ENCODE measurements at regions of chr9 and their contacts with region 1.

Region 1: DNA sequence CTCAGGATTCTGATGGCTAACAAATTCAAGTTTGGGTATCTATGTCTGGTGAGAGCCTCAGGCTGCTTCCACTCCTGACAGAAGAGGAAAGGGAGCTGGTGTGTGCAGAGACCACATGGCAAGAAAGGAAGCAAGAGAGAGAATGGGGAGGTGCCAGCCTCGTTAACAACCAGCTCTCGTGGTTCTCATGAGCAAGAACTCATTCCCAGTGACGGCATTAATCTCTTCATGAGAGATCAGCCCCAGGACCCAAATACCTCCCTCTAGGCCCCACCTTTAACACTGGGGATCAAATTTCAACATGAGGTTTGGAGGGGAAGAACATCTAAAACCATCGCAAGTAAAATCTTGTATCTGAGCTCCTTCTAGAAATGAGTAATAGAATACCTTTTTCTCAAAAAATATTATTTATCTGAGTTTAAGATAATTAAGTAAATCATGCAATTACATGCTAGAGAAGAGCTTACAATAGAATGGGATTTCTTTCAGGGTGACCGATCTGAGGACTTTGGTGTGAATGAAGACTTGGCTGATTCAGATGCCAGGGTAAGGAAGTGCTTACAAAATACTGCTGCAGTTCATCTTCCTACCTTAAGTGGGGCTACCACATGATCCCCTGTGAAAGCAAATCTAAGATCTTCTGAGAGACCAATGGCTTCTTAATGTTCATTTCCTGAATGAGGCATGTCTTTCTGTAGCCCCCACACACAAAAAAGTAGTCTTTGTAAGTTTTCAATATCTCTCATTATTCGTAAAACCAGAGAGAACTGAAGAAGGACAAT is 11.5 kb downstream of the ANXA1 start:
- DNase-seq: no peak
- H3K4me3 Mint-ChIP-seq: no peak overlapping the region
- H3K27ac Mint-ChIP-seq: no peak overlapping the region
- H3K4me1 Mint-ChIP-seq: peaks cover 4% of the 10 kb centered on the region
- H3K27me3 Mint-ChIP-seq: no peaks in the 10 kb centered on the region
- CTCF ChIP-seq: no peak

Region 2: GRCh38 chr9:72894342-72894741 is 268.8 kb before region 1 on chr9:
- CTCF ChIA-PET with region 1: no interaction called
- POLR2A ChIA-PET with region 1: no interaction called
- intact Hi-C with region 1: no loop called
- DNase-seq: no peak
- H3K4me3 Mint-ChIP-seq: no peak overlapping the region
- H3K27ac Mint-ChIP-seq: no peak overlapping the region
- H3K4me1 Mint-ChIP-seq: no peaks in the 10 kb centered on the region
- H3K27me3 Mint-ChIP-seq: peaks cover 80% of the 10 kb centered on the region
- CTCF ChIP-seq: no peak

Region 3: GRCh38 chr9:73104342-73104741 is 58.8 kb before region 1 on chr9:
- CTCF ChIA-PET with region 1: interaction called, 18 read pairs
- POLR2A ChIA-PET with region 1: interaction called, 5 read pairs
- intact Hi-C with region 1: no loop called
- DNase-seq: no peak
- H3K4me3 Mint-ChIP-seq: no peak overlapping the region
- H3K27ac Mint-ChIP-seq: no peak overlapping the region
- H3K4me1 Mint-ChIP-seq: peaks cover 7% of the 10 kb centered on the region
- H3K27me3 Mint-ChIP-seq: no peaks in the 10 kb centered on the region
- CTCF ChIP-seq: no peak

Region 4: DNA sequence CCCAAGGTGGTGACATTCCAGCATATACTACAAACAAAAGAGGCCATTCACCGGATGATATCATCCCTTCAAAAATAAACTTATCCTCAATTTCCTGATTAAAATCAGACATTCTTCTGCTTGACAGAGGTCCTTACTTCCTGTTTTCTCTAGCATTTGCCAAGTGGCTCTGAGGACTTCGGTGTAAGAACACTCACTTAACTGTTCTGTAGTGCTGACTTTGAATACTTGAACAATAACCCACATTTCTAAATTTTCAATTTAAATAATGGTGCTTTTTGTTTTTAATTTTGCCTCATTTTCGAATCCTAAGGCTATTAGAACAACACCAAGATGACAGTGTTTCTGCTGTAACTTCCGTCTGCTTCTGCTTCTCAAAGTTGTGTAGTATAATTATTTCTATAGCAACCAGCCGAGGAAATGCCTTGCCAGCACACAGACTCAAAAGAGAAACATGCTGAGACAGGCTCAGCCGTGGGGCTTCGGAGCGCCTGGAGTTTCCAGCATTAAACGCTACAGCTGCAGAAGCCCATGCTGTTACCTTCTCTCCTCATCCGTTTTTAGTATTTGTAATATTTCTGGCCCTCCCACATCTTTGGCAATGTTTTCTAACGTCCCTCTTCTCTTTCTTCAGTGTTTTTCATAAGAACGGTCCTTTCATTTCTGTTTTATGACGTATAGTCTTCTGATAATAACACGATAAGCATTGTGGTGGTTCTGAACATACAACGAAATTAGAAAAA is 31.0 kb before region 1 on chr9:
- CTCF ChIA-PET with region 1: interaction called, 3 read pairs
- POLR2A ChIA-PET with region 1: interaction called, 95 read pairs
- intact Hi-C with region 1: no loop called
- DNase-seq: peak; percentile 90
- H3K4me3 Mint-ChIP-seq: peak overlapping the region; percentile 76
- H3K27ac Mint-ChIP-seq: peak overlapping the region; percentile 97
- H3K4me1 Mint-ChIP-seq: peaks cover 31% of the 10 kb centered on the region
- H3K27me3 Mint-ChIP-seq: no peaks in the 10 kb centered on the region
- CTCF ChIP-seq: no peak

Region 5: DNA sequence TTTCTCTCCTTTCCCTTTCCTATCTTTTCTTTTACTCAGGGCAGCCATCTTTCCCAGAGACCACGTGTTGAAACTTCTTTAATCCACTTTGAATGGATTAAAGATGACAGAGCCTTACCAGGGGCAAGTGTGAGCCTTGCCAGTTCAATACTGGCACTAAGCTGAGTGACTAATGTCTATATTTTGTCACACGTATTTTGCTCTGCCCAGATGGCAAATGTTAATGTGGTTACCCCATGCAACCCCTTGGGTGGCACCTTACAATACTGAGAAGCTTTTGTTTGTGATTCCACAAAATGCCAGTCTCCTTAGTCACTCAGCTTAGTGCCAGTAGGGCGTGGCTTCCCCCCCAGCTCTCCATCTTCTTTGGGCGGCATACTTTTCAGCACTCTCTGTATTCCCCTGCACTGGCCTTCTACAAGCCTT is 13.3 kb after region 1 on chr9:
- CTCF ChIA-PET with region 1: interaction called, 4 read pairs
- POLR2A ChIA-PET with region 1: interaction called, 34 read pairs
- intact Hi-C with region 1: no loop called
- DNase-seq: peak; percentile 80
- H3K4me3 Mint-ChIP-seq: no peak overlapping the region
- H3K27ac Mint-ChIP-seq: peak overlapping the region; percentile 83
- H3K4me1 Mint-ChIP-seq: peaks cover 15% of the 10 kb centered on the region
- H3K27me3 Mint-ChIP-seq: no peaks in the 10 kb centered on the region
- CTCF ChIP-seq: no peak